Panc1 (cell line): ENCODE measurements at regions of chr7 and their contacts with region 1.

Region 1: GRCh38 chr7:144854839-144855424 is 19.1 kb upstream of the TPK1 start:
- DNase-seq: no peak
- ATAC-seq: peak; percentile 68; the same call in 1 of the 2 replicates
- H3K4me3 ChIP-seq: no peak overlapping the region
- H3K27ac ChIP-seq: no peak overlapping the region
- H3K4me1 ChIP-seq: peaks cover 5% of the 10 kb centered on the region
- H3K27me3 ChIP-seq: peaks cover 3% of the 10 kb centered on the region; the same call in 1 of the 2 replicates
- CTCF ChIP-seq: peak; percentile 74; the same call in 1 of the 2 replicates

Region 2: DNA sequence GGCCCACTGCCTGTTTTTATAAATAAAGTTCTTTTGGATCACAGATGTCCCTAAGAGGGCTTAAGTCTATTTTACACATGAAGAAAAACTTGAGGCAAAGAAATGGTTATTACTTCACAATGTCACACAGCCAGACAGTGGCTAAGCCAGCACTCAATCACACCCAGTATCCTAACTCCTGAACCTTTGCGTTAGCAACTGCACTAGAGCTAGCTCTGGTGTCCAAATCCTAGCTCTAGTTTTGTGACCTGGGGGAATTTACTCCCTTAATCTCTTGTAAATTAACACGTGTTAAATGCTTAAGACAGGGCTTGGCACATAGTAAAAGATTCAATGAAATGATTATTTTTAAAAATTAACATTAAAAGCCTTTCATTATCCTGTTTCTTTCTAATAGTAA is 30.0 kb after region 1 on chr7:
- CTCF ChIA-PET with region 1: no interaction called
- POLR2A ChIA-PET with region 1: no interaction called
- in situ Hi-C with region 1: no loop called
- intact Hi-C with region 1: no loop called
- DNase-seq: no peak
- ATAC-seq: no peak
- H3K4me3 ChIP-seq: no peak overlapping the region
- H3K27ac ChIP-seq: no peak overlapping the region
- H3K4me1 ChIP-seq: no peaks in the 10 kb centered on the region
- H3K27me3 ChIP-seq: no peaks in the 10 kb centered on the region
- CTCF ChIP-seq: no peak

Region 3: DNA sequence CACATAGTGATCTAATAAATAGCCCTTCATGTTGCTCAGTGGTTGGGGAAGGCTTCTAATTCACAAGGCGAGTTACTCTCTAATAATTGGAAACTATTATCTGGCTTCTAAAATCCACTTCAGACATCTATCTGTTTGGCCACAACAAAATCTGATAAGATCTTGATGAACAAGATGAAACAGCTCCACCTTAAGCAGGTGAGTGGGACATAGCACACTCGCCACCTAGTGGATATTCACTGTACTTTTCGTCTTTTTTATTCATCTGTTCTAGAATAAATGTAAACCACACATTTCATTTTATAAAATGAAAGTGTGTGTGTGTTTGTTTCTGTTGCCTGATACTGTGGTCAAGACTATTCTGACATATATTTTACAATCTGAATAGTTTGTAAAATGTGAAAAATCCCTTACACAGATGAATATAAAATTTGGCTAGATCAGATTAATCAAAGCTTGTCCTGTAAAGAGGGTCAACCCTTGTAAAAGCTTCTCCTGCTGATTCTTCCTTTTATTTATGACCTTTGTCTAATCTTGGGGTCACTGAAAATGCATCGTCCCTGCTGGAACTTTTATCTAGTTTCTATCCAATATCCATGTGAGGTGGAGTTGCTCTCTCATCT is 1235.2 kb after region 1 on chr7:
- CTCF ChIA-PET with region 1: no interaction called
- POLR2A ChIA-PET with region 1: no interaction called
- in situ Hi-C with region 1: no loop called
- intact Hi-C with region 1: loop called (anchors 2 kb)
- DNase-seq: peak; percentile 33
- ATAC-seq: peak; percentile 71; the same call in 1 of the 2 replicates
- H3K4me3 ChIP-seq: no peak overlapping the region
- H3K27ac ChIP-seq: no peak overlapping the region
- H3K4me1 ChIP-seq: no peaks in the 10 kb centered on the region
- H3K27me3 ChIP-seq: no peaks in the 10 kb centered on the region
- CTCF ChIP-seq: peak; percentile 75; the same call in 1 of the 2 replicates